ENCODE measurements at regions of chr16 and their contacts with region 1.

Region 1: DNA sequence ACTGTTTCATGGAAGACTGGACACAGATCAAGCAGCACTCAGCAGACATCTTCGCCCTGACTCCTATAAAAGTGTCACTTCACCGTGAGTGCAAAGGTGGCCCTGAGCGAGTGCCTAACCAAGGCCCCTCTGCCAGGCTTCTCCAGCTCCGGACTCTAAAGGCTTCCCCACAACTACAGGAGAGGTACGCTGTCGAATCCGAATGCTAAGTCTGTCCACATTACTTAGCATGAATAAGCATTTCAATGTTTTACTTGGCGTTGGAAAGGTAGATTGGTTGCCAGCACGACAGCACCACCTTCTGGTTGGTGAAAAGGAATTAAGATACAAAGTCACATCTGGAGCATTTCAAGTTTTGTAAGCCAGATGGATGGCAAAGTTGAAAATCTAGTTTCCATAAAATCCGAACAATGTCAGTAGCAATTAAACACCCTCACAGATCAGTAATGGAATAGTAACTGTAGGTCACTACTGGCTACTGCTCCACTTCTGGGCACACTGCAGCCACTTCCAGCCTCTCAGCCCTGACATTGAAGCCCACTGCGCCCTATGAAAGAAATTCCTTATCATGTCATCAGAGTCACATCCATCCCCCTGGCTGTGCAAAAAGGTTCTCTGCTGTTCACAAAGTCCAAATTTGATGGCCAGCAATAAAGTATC is 100.9 kb downstream of the PARN start:
- DNase-seq: peak; percentile 81
- H3K4me3 ChIP-seq: no peak overlapping the region
- H3K27ac ChIP-seq: peak overlapping the region; percentile 43 to 60
- H3K4me1 ChIP-seq: peaks cover 7% of the 10 kb centered on the region
- H3K27me3 ChIP-seq: no peaks in the 10 kb centered on the region
- CTCF ChIP-seq: peak; percentile 74 to 94 (median 86)
- POLR2A ChIP-seq: no peak

Region 2: DNA sequence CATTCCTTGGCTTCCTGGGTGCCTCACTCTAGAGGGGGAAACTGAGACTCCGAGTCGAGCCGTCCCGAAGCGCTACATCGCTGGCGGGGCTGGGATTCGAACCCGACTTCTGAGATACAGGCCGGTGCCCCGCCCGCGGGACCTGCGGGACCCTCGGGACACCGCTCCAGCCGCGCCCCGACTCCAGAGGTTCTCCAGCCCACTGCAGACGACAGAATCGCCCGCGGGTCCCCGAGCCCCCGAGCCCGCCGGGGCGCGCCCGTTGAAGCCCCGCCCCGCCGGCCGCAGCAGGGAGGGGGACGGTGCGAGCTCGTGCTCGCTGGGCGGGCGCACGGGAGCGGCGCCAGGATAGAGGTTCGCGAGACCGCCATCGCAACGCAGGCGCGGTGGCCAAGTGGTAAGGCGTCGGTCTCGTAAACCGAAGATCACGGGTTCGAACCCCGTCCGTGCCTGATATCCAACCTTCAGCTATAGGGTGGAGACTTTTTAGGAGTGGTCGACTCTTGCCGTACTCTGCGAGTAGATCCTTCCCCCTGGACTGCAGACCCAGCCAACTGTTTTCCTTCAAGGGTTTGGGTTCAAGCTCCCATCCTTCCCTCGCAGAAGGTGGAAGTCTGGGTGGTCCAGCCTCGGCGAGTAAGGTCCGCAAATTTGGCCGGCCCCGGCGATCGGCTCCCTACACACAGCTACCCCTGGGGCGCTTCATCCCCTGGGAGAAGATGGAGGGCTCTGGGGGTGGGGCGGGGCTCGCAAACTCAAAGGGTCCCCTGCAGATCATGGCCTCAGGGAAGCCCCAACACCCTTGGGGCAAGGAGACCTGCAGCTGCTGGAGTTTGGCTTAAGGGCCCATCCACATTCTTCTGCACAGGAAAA is 243.4 kb before region 1 on chr16:
- intact Hi-C with region 1: loop called (anchors 5 kb)
- DNase-seq: peak; percentile 89
- H3K4me3 ChIP-seq: peak overlapping the region; percentile 79 to 86
- H3K27ac ChIP-seq: peak overlapping the region; percentile 91 to 92
- H3K4me1 ChIP-seq: no peaks in the 10 kb centered on the region
- H3K27me3 ChIP-seq: no peaks in the 10 kb centered on the region
- CTCF ChIP-seq: peak in 1 of 4 experiments; percentile 3
- POLR2A ChIP-seq: no peak

Region 3: GRCh38 chr16:14300705-14301168 is 228.4 kb before region 1 on chr16:
- intact Hi-C with region 1: loop called (anchors 1 kb)
- DNase-seq: peak; percentile 74
- H3K4me3 ChIP-seq: peak overlapping the region; percentile 85 to 90
- H3K27ac ChIP-seq: peak overlapping the region; percentile 72 to 77
- H3K4me1 ChIP-seq: peaks cover 4% of the 10 kb centered on the region
- H3K27me3 ChIP-seq: no peaks in the 10 kb centered on the region
- CTCF ChIP-seq: peak in 3 of 4 experiments; percentile 66 to 81 (median 66)
- POLR2A ChIP-seq: no peak

Region 4: GRCh38 chr16:14399378-14400284 is 129.5 kb before region 1 on chr16:
- intact Hi-C with region 1: loop called (anchors 10 kb)
- DNase-seq: no peak
- H3K4me3 ChIP-seq: no peak overlapping the region
- H3K27ac ChIP-seq: peak overlapping the region; percentile 45 to 65
- H3K4me1 ChIP-seq: no peaks in the 10 kb centered on the region
- H3K27me3 ChIP-seq: no peaks in the 10 kb centered on the region
- CTCF ChIP-seq: no peak
- POLR2A ChIP-seq: no peak

Region 5: GRCh38 chr16:14455576-14455975 is 73.6 kb before region 1 on chr16:
- intact Hi-C with region 1: no loop called
- DNase-seq: no peak
- H3K4me3 ChIP-seq: no peak overlapping the region
- H3K27ac ChIP-seq: no peak overlapping the region
- H3K4me1 ChIP-seq: no peaks in the 10 kb centered on the region
- H3K27me3 ChIP-seq: no peaks in the 10 kb centered on the region
- CTCF ChIP-seq: no peak
- POLR2A ChIP-seq: no peak

Region 6: DNA sequence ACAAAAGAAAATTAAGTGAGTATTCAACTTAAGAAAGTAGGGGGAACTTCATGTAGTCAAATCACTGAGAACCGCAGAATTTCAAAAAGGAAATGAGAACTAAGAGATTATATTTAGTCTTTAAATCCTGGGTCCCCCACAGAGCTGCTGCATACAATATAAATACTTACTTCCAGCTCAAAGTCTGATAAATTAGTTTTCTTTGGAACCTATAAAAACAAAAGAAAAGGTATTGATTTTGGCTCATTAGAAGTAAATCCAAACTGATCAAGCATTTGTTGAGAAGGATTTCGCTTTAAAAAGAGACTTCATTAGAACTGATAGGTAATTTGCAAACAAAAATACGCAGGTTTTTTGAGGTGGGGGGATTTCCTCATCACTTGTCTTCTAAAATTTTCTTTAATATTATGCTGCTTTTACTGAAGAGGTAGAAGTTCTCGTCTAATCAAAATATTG is 79.0 kb after region 1 on chr16:
- intact Hi-C with region 1: no loop called
- DNase-seq: no peak
- H3K4me3 ChIP-seq: no peak overlapping the region
- H3K27ac ChIP-seq: no peak overlapping the region
- H3K4me1 ChIP-seq: no peaks in the 10 kb centered on the region
- H3K27me3 ChIP-seq: no peaks in the 10 kb centered on the region
- CTCF ChIP-seq: no peak
- POLR2A ChIP-seq: no peak